Activated T-helper 1 cell treated with anti-CD3 and anti-CD28 coated beads, Interleukin-12 subunit alpha, Interleukin-12 subunit beta, Interleukin-2, Interleukin-4 antibody, amounts not matched to agents 30 ng/mL and 10 ng/mL and 1 ng/mL, durations not matched to agents 14 hours and 24 hours and 36 hours (primary cell): ENCODE measurements at regions of chr12 and their contacts with region 1.

Region 1: GRCh38 chr12:104671407-104672098 is 214.8 kb downstream of the CHST11 start:
- DNase-seq: peak; percentile 82
- H3K4me3 Mint-ChIP-seq: peak overlapping the region; percentile 50
- H3K27ac Mint-ChIP-seq: peak overlapping the region; percentile 91
- H3K4me1 Mint-ChIP-seq: peaks cover 82% of the 10 kb centered on the region
- H3K27me3 Mint-ChIP-seq: no peaks in the 10 kb centered on the region

Region 2: GRCh38 chr12:104215638-104216297 is 455.8 kb before region 1 on chr12 and contains the start of gene TXNRD1:
- intact Hi-C with region 1: loop called (anchors 5 kb)
- DNase-seq: peak; percentile 79
- H3K4me3 Mint-ChIP-seq: peak within 1 kb of the TSS; percentile 82
- H3K27ac Mint-ChIP-seq: peak within 1 kb of the TSS; percentile 55
- H3K4me1 Mint-ChIP-seq: peaks cover 44% of the 10 kb centered on the region
- H3K27me3 Mint-ChIP-seq: peaks cover 6% of the 10 kb centered on the region
- total RNA-seq, gene TXNRD1: 93.3 and 103 TPM in 2 replicates

Region 3: DNA sequence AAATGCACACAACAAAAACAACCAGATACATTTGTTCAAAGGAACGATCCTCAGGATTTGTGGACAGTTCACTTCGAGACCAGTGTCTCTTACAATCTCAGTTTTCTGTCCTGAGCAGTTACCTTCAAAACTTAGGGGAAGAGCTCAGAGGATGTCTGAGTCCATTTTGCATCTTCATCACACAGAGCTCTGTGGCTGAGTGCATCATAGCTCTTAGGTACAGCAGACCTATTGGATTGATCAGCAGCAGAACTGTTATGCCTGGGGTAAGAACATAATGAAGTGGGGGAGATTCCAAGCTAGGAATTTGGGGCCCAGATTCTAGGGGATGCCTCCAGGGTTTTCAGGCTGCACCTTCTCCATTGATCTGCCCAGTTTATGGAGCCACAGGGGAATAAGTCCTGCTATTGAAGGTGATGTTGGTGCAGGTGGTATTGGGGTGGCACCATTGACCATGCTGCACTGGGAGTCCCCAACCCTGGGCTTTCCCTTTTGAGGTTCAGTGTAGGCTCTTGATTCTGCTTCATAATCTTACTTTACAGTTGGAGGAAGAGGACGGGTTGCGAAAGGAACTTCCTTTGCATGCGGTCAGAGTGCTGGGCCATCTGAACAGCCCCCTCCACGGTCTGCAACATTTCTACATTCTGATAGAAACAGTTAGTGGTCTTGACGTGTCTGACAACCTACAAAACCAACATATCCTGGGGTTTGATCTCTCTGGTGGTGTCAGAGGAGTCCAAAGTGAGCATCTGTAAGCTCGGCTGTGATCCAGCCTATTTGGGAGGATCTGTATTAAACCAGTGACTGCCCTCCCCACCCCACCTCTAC is 102.0 kb before region 1 on chr12:
- intact Hi-C with region 1: loop called (anchors 1 kb)
- DNase-seq: peak; percentile 58
- H3K4me3 Mint-ChIP-seq: peak overlapping the region; percentile 64
- H3K27ac Mint-ChIP-seq: peak overlapping the region; percentile 89
- H3K4me1 Mint-ChIP-seq: peaks cover 63% of the 10 kb centered on the region
- H3K27me3 Mint-ChIP-seq: no peaks in the 10 kb centered on the region

Region 4: DNA sequence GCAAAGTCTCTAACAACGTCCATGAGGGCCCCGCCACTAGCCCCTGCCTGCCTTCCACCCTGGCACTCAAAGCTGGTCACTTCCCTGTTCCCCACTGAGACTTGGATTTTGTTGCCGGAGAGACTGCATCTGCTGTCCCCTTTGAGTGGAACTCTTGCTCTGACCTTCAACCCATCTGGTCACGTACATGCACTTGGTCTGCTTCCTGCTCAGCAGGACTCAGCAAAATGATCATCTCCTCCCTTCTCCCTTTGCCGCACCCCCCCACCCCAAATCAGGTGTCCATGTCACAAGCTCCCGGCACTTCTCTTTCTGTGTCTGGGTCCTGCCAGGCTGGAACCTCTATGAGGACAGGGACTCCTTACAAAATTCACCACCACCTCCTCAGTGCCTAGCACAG is 33.9 kb before region 1 on chr12:
- intact Hi-C with region 1: loop called (anchors 2 kb)
- DNase-seq: no peak
- H3K4me3 Mint-ChIP-seq: no peak overlapping the region
- H3K27ac Mint-ChIP-seq: peak overlapping the region; percentile 42
- H3K4me1 Mint-ChIP-seq: peaks cover 56% of the 10 kb centered on the region
- H3K27me3 Mint-ChIP-seq: no peaks in the 10 kb centered on the region

Region 5: DNA sequence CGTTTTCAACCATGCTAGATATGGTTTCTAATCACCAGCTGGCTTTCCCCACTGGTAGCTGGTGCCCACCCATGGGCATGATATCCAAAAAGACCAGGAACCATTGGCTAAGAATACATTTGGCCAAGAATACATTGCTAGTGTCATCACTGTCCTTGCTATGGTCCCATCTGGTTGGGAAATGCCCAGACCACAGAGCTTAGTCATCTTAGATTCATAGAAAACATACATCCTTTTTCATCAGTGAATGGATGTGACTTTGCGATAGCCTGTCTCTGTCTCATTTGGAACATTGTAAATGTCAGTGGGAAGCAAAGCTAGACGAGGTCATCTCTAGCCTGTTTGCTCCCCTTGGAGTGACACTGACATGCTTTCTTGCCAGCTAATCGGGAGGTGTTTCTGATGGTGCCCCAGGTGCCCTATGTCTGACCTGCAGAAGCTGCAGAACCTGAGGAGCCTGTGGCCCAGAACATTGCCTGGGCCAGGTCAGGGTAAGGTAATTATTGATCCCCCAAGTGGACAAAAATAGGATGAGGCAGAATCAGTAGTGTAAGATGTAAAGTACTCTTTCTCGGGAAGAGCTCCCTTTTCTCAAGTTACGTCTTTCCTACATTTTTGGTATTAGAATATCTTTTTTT is 91.7 kb after region 1 on chr12:
- intact Hi-C with region 1: loop called (anchors 1 kb)
- DNase-seq: no peak
- H3K4me3 Mint-ChIP-seq: peak overlapping the region; percentile 76
- H3K27ac Mint-ChIP-seq: peak overlapping the region; percentile 91
- H3K4me1 Mint-ChIP-seq: peaks cover 70% of the 10 kb centered on the region
- H3K27me3 Mint-ChIP-seq: no peaks in the 10 kb centered on the region

Region 6: GRCh38 chr12:104805186-104805585 is 133.6 kb after region 1 on chr12:
- intact Hi-C with region 1: no loop called
- DNase-seq: no peak
- H3K4me3 Mint-ChIP-seq: no peak overlapping the region
- H3K27ac Mint-ChIP-seq: no peak overlapping the region
- H3K4me1 Mint-ChIP-seq: no peaks in the 10 kb centered on the region
- H3K27me3 Mint-ChIP-seq: peaks cover 6% of the 10 kb centered on the region